ENCODE measurements at regions of chr3 and their contacts with region 1.

Region 1: DNA sequence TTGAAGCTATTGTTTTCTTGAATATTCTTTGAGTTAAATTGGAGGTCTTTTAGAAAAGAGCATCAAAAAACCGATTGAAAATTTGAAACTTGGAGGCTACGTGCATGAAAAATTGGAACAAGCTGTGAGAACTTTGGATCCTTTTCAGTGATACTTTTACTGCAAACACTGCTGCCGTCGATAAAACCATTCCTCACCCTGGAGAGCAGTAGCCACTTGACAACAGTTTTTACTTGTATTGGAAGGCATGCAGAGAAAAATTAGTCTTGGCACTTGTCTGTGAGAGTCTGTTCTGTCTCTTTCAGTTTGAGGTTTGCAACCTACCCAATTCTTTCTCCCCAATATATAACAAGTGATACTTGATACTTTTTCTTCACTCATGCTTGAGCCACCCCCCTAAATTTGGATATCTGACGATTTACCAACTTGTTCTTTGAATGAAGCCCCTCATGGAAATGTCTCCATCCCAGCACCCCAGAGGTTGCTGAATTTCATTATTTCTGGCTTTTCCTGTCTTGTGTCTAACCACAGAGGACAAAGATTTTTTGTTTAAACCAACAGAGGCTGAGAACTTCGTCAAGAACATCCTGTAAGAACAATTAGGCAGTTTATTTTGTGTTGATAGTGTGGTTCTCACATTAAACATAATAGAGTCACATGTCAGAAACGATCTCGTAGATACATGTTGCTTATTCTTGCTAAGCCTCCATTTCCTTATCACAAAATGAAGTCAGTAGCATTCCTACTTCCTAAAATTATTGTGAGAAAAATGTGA is 307.3 kb upstream of the PLSCR5 start:
- DNase-seq: no peak
- H3K4me3 ChIP-seq: no peak overlapping the region
- H3K4me3 Mint-ChIP-seq: no peak overlapping the region
- H3K27ac ChIP-seq: no peak overlapping the region
- H3K27ac Mint-ChIP-seq: no peak overlapping the region
- H3K4me1 ChIP-seq: no peaks in the 10 kb centered on the region
- H3K4me1 Mint-ChIP-seq: no peaks in the 10 kb centered on the region
- H3K27me3 ChIP-seq: no peaks in the 10 kb centered on the region
- H3K27me3 Mint-ChIP-seq: no peaks in the 10 kb centered on the region

Region 2: GRCh38 chr3:146953511-146953981 is 41.1 kb after region 1 on chr3:
- CTCF ChIA-PET with region 1: no interaction called
- POLR2A ChIA-PET with region 1: no interaction called
- intact Hi-C with region 1: loop called (anchors 1 kb)
- DNase-seq: no peak
- H3K4me3 ChIP-seq: no peak overlapping the region
- H3K4me3 Mint-ChIP-seq: no peak overlapping the region
- H3K27ac ChIP-seq: no peak overlapping the region
- H3K27ac Mint-ChIP-seq: no peak overlapping the region
- H3K4me1 ChIP-seq: no peaks in the 10 kb centered on the region
- H3K4me1 Mint-ChIP-seq: no peaks in the 10 kb centered on the region
- H3K27me3 ChIP-seq: no peaks in the 10 kb centered on the region
- H3K27me3 Mint-ChIP-seq: no peaks in the 10 kb centered on the region

Region 3: DNA sequence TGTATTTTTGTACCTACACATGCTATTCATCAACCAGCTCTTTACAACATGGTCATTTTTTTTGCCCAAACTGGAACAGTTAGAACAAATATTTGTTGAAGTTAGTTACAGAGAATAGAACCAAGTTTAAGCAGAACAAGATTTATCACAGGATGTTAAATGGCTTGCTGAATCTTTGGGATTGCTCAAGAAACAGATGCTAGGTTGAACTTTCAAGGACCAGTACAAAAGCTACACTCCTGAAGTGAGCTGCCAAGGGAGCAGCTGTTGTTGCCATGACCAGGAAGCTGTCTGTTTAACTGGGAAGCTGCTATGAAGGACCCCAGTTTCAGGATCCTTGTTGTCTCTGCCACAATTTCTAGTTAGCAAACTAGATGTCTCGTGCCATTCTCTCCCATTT is 550.4 kb after region 1 on chr3:
- CTCF ChIA-PET with region 1: no interaction called
- POLR2A ChIA-PET with region 1: no interaction called
- intact Hi-C with region 1: no loop called
- DNase-seq: no peak
- H3K4me3 ChIP-seq: no peak overlapping the region
- H3K4me3 Mint-ChIP-seq: no peak overlapping the region
- H3K27ac ChIP-seq: no peak overlapping the region
- H3K27ac Mint-ChIP-seq: no peak overlapping the region
- H3K4me1 ChIP-seq: no peaks in the 10 kb centered on the region
- H3K4me1 Mint-ChIP-seq: no peaks in the 10 kb centered on the region
- H3K27me3 ChIP-seq: no peaks in the 10 kb centered on the region
- H3K27me3 Mint-ChIP-seq: no peaks in the 10 kb centered on the region

Region 4: DNA sequence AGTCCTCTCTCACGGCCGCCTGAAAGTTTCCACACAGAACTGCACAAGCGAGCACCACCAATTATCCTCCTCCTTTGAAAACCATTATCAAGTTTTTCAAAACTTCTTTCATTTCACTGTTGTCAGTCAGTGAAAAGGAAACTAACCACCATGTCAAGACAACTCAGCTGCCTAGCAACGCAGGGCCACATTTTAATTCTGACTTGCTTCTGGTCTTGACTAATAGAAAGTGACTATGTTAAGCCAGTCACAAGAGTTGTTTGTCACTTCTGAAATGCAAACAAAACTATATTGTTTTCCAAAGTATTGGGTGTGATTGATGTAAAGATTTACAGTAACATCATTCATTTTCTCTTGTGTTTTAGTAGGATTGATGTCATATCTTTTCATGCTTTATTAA is 1172.5 kb after region 1 on chr3:
- CTCF ChIA-PET with region 1: no interaction called
- POLR2A ChIA-PET with region 1: no interaction called
- intact Hi-C with region 1: no loop called
- DNase-seq: peak in 1 of 5 donors; percentile 1
- H3K4me3 ChIP-seq: no peak overlapping the region
- H3K4me3 Mint-ChIP-seq: no peak overlapping the region
- H3K27ac ChIP-seq: no peak overlapping the region
- H3K27ac Mint-ChIP-seq: no peak overlapping the region
- H3K4me1 ChIP-seq: no peaks in the 10 kb centered on the region
- H3K4me1 Mint-ChIP-seq: no peaks in the 10 kb centered on the region
- H3K27me3 ChIP-seq: no peaks in the 10 kb centered on the region
- H3K27me3 Mint-ChIP-seq: no peaks in the 10 kb centered on the region

Measured in CD4-positive, alpha-beta memory T cell (primary cell).